CD4-positive, alpha-beta T cell (primary cell): ENCODE measurements at regions of chr1 and their contacts with region 1.

Region 1: GRCh38 chr1:33127001-33127791 is 46.2 kb downstream of the AZIN2 start:
- DNase-seq: peak; percentile 95 to 100 (median 98)
- ATAC-seq: peak; percentile 82
- H3K4me3 ChIP-seq: peak overlapping the region; percentile 66
- H3K4me3 Mint-ChIP-seq: peak overlapping the region; percentile 88
- H3K27ac ChIP-seq: peak overlapping the region; percentile 84 to 90
- H3K27ac Mint-ChIP-seq: peak overlapping the region; percentile 99
- H3K4me1 ChIP-seq: peaks cover 27% of the 10 kb centered on the region
- H3K4me1 Mint-ChIP-seq: peaks cover 57% of the 10 kb centered on the region
- H3K27me3 ChIP-seq: no peaks in the 10 kb centered on the region
- H3K27me3 Mint-ChIP-seq: no peaks in the 10 kb centered on the region
- CTCF ChIP-seq: peak; percentile 82

Region 2: GRCh38 chr1:32964461-32965250 is 162.5 kb before region 1 on chr1 and contains the start of gene RNF19B:
- CTCF ChIA-PET with region 1: interaction called, 8 read pairs
- POLR2A ChIA-PET with region 1: interaction called, 20 read pairs
- intact Hi-C with region 1: loop called in 1 of 2 experiments (anchors 5 kb)
- DNase-seq: peak; percentile 87 to 97 (median 94)
- ATAC-seq: peak; percentile 93
- H3K4me3 ChIP-seq: peak within 1 kb of the TSS; percentile 73
- H3K4me3 Mint-ChIP-seq: peak within 1 kb of the TSS; percentile 93
- H3K27ac ChIP-seq: peak within 1 kb of the TSS; percentile 59 to 61
- H3K27ac Mint-ChIP-seq: peak within 1 kb of the TSS; percentile 89
- H3K4me1 ChIP-seq: peaks cover 21% of the 10 kb centered on the region
- H3K4me1 Mint-ChIP-seq: peaks cover 37% of the 10 kb centered on the region
- H3K27me3 ChIP-seq: no peaks in the 10 kb centered on the region
- H3K27me3 Mint-ChIP-seq: no peaks in the 10 kb centered on the region
- CTCF ChIP-seq: no peak
- total RNA-seq, gene RNF19B: 33.4 to 37.4 TPM

Region 3: GRCh38 chr1:33094971-33095604 is 32.1 kb before region 1 on chr1:
- CTCF ChIA-PET with region 1: interaction called, 9 read pairs
- POLR2A ChIA-PET with region 1: interaction called, 50 read pairs
- intact Hi-C with region 1: loop called (anchors 1 to 2 kb)
- DNase-seq: peak in 4 of 14 experiments; percentile 11 to 54 (median 52)
- ATAC-seq: no peak
- H3K4me3 ChIP-seq: no peak overlapping the region
- H3K4me3 Mint-ChIP-seq: no peak overlapping the region
- H3K27ac ChIP-seq: no peak overlapping the region
- H3K27ac Mint-ChIP-seq: no peak overlapping the region
- H3K4me1 ChIP-seq: peaks cover 34% of the 10 kb centered on the region
- H3K4me1 Mint-ChIP-seq: peaks cover 36% of the 10 kb centered on the region
- H3K27me3 ChIP-seq: no peaks in the 10 kb centered on the region
- H3K27me3 Mint-ChIP-seq: no peaks in the 10 kb centered on the region
- CTCF ChIP-seq: peak; percentile 99

Region 4: GRCh38 chr1:33137800-33138199 is 10.6 kb after region 1 on chr1:
- CTCF ChIA-PET with region 1: interaction called, 11 read pairs
- POLR2A ChIA-PET with region 1: interaction called, 14 read pairs
- intact Hi-C with region 1: no loop called
- DNase-seq: peak in 11 of 14 experiments; percentile 9 to 55 (median 31)
- ATAC-seq: peak; percentile 55
- H3K4me3 ChIP-seq: no peak overlapping the region
- H3K4me3 Mint-ChIP-seq: no peak overlapping the region
- H3K27ac ChIP-seq: no peak overlapping the region
- H3K27ac Mint-ChIP-seq: no peak overlapping the region
- H3K4me1 ChIP-seq: peaks cover 7% of the 10 kb centered on the region
- H3K4me1 Mint-ChIP-seq: peaks cover 14% of the 10 kb centered on the region
- H3K27me3 ChIP-seq: no peaks in the 10 kb centered on the region
- H3K27me3 Mint-ChIP-seq: no peaks in the 10 kb centered on the region
- CTCF ChIP-seq: peak; percentile 21

Region 5: GRCh38 chr1:33181921-33182341 is 54.7 kb after region 1 on chr1 and contains the start of gene TRIM62:
- CTCF ChIA-PET with region 1: interaction called, 33 read pairs
- POLR2A ChIA-PET with region 1: interaction called, 123 read pairs
- intact Hi-C with region 1: loop called (anchors 2 kb)
- DNase-seq: peak; percentile 60 to 89 (median 72)
- ATAC-seq: peak; percentile 71
- H3K4me3 ChIP-seq: peak within 1 kb of the TSS; percentile 88
- H3K4me3 Mint-ChIP-seq: peak within 1 kb of the TSS; percentile 93
- H3K27ac ChIP-seq: peak within 1 kb of the TSS in 1 of 2 donors; percentile 30
- H3K27ac Mint-ChIP-seq: peak within 1 kb of the TSS; percentile 62
- H3K4me1 ChIP-seq: peaks cover 23% of the 10 kb centered on the region
- H3K4me1 Mint-ChIP-seq: peaks cover 34% of the 10 kb centered on the region
- H3K27me3 ChIP-seq: peaks cover 0 to 3% of the 10 kb centered on the region in 2 experiments
- H3K27me3 Mint-ChIP-seq: no peaks in the 10 kb centered on the region
- CTCF ChIP-seq: no peak
- total RNA-seq, gene TRIM62: 18.9 to 23.0 TPM

Region 6: DNA sequence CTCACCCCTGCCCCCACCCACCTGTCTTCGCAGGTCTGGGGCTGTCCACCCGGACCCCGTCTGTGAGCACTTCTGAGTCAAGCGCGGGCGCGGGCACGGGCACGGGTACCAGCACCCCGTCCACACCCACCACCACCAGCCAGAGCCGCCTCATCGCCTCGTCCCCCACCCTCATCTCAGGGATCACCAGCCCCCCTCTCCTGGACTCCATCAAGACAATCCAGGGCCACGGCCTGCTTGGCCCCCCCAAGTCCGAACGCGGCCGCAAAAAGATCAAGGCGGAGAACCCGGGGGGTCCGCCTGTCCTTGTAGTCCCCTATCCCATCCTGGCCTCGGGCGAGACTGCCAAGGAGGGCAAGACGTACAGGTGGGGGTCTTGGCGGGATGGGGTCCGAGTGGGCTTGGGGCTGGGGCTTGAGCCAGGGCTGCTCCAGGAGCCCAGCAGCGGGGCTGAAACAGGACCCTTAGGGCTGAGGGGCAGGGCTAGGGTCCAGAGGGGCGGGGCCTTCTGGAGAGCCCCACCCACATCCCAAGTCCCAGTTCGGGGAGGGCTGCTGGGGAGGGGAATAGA is 153.0 kb after region 1 on chr1:
- CTCF ChIA-PET with region 1: no interaction called
- POLR2A ChIA-PET with region 1: no interaction called
- intact Hi-C with region 1: no loop called
- DNase-seq: no peak
- ATAC-seq: no peak
- H3K4me3 ChIP-seq: no peak overlapping the region
- H3K4me3 Mint-ChIP-seq: no peak overlapping the region
- H3K27ac ChIP-seq: no peak overlapping the region
- H3K27ac Mint-ChIP-seq: no peak overlapping the region
- H3K4me1 ChIP-seq: no peaks in the 10 kb centered on the region
- H3K4me1 Mint-ChIP-seq: no peaks in the 10 kb centered on the region
- H3K27me3 ChIP-seq: no peaks in the 10 kb centered on the region
- H3K27me3 Mint-ChIP-seq: no peaks in the 10 kb centered on the region
- CTCF ChIP-seq: no peak

Region 7: DNA sequence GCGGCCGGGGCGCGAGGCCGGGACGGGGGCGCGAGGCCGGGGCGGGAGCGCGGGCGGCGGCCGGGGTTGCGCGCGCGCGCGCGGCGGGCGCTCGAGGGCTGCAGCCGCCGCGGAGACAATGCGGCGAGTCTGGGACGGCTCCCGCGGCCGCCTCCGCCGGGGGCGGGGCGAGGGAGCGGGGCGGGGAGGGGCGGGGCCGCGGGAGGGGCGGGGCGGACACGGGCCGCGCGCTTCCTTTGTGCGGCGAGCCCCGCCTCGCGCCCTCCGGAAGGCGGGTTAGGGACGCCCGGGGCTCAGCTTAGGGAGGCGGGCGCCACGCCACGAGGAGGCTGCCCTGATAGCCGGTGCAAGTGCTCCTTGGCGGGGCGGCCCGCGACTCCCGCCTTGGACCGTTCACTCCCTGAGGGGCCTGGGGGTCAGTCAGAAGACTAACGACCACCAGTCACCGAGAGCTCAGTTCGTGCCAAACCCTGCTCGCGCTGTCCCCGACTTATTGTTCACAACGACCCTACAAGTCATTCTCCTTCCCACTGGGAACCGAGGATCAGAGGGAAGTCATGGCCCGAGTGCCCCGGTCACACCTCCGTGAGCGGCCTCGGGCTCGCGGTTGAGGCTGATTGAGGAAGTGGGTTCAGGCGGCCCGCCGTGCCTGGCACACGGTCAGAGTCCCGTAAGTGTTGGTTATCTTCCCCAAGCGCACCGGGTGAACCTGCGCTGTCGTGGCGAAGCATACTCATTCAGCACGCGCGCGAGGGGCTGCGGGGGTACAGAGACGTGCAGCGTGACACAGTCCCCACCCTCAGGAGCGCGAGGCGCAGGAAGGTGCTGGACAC is 222.8 kb after region 1 on chr1:
- CTCF ChIA-PET with region 1: interaction called, 3 read pairs
- POLR2A ChIA-PET with region 1: interaction called, 10 read pairs
- intact Hi-C with region 1: no loop called
- DNase-seq: peak; percentile 53 to 92 (median 74)
- ATAC-seq: peak; percentile 86
- H3K4me3 ChIP-seq: peak overlapping the region; percentile 90
- H3K4me3 Mint-ChIP-seq: peak overlapping the region; percentile 87
- H3K27ac ChIP-seq: peak overlapping the region in 1 of 2 donors; percentile 56
- H3K27ac Mint-ChIP-seq: peak overlapping the region; percentile 84
- H3K4me1 ChIP-seq: peaks cover 30% of the 10 kb centered on the region
- H3K4me1 Mint-ChIP-seq: peaks cover 46% of the 10 kb centered on the region
- H3K27me3 ChIP-seq: no peaks in the 10 kb centered on the region
- H3K27me3 Mint-ChIP-seq: no peaks in the 10 kb centered on the region
- CTCF ChIP-seq: no peak